ENCODE measurements at regions of chr10 and their contacts with region 1.

Region 1: GRCh38 chr10:6151087-6151977 is 51.4 kb upstream of the PFKFB3 start:
- DNase-seq: peak; percentile 88 to 95 (median 92)
- H3K4me3 ChIP-seq: peak overlapping the region in 6 of 7 experiments; percentile 19 to 76 (median 56)
- H3K27ac ChIP-seq: peak overlapping the region; percentile 33 to 67
- H3K4me1 ChIP-seq: peaks cover 14 to 73% (median 59%) of the 10 kb centered on the region in 4 experiments
- H3K27me3 ChIP-seq: no peaks in the 10 kb centered on the region

Region 2: DNA sequence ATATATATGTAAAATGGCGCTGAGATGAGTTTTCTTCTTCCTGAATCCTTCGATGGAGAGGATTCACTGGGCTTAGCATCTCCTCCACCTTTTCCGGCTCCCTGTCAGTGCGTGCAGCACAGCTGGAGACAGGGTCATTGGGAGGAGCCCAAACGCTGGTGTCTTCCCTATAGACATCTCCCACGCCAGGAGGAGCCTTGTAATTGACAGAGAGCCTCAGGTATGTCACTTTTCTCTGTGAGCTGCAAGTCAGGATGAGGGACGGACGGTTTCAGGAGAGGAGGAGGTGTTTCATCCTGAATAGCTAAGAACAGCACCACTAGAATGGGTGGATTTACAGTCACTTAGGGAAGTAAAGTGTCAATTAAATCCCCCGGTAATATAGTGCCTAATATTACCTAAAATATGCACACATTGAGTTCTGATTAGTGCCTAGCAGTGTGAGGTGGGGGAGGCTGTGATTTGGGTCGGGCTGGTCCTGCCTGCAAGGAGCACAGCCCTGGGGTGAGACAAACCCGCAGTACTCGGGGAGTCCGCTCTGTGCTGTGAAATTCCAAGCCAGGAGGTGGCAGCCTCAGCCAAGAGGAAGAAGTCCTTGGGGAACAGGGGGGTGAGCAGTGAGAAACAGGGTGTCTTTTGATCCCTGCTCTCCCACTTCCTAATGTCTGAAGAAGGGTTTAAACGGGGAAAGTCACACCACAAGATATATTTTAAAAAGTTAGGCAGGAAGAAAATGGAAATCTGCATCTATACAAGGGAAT is 202.2 kb before region 1 on chr10:
- CTCF ChIA-PET with region 1: no interaction called
- POLR2A ChIA-PET with region 1: no interaction called
- DNase-seq: peak; percentile 29 to 49 (median 39)
- H3K4me3 ChIP-seq: no peak overlapping the region
- H3K27ac ChIP-seq: no peak overlapping the region
- H3K4me1 ChIP-seq: peaks cover 0 to 26% (median 24%) of the 10 kb centered on the region in 4 experiments
- H3K27me3 ChIP-seq: no peaks in the 10 kb centered on the region

Region 3: GRCh38 chr10:6108603-6109443 is 42.5 kb before region 1 on chr10:
- CTCF ChIA-PET with region 1: interaction called, 30 read pairs
- POLR2A ChIA-PET with region 1: interaction called, 3 read pairs
- DNase-seq: peak; percentile 64 to 81 (median 78)
- H3K4me3 ChIP-seq: no peak overlapping the region
- H3K27ac ChIP-seq: peak overlapping the region in 1 of 2 experiments; percentile 6
- H3K4me1 ChIP-seq: peaks cover 0 to 9% (median 4%) of the 10 kb centered on the region in 4 experiments
- H3K27me3 ChIP-seq: no peaks in the 10 kb centered on the region

Region 4: GRCh38 chr10:6128591-6129251 is 22.6 kb before region 1 on chr10:
- CTCF ChIA-PET with region 1: interaction called, 20 read pairs
- POLR2A ChIA-PET with region 1: interaction called, 7 read pairs
- DNase-seq: peak; percentile 36 to 85 (median 82)
- H3K4me3 ChIP-seq: peak overlapping the region in 4 of 7 experiments; percentile 6 to 63 (median 30)
- H3K27ac ChIP-seq: no peak overlapping the region
- H3K4me1 ChIP-seq: peaks cover 7 to 41% (median 39%) of the 10 kb centered on the region in 4 experiments
- H3K27me3 ChIP-seq: no peaks in the 10 kb centered on the region

Region 5: DNA sequence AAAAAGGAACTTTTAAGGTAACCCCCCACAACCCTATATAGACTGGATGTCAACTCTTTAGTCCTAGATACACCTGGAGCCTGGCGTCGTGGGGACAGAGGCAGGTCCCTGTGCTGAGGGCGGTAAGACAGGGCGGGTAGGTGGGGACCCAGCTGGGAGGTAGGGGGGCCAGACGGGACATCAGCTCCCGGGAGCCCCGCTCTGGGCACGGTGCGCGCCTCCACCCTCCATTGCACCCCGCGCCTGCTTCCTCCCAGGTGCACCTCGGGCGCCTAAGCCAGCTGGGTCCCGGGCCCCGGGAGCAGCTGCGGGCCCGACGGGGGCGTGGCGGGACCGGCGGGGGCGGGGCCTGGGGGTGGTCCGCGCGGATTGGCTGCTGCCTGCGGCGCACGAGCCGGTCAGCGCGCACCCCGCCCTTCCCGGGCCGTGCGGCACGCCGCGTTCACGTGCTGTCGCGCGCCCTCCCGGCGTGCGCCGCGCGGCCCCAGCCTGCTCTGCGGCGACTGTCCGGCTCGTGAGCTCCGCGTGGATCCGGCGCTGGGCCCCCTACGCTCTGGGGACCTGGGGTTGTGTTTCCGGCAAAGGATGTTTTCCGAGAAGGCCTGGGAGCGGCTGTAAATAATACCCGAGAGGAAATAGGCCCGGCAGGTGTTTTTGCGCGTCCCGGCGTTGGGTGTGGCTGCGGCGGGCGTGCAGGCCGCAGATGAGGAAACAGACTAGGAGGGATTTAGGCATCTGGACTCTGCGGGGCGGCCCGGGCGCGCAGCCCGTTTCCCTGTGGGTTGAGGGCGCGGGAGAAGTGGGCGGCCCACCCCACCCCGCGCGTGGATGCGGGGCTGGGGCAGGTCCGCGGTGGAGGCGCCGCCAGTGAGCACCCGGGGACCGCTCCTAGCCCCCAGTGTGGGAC is 12.3 kb after region 1 on chr10:
- CTCF ChIA-PET with region 1: interaction called, 34 read pairs
- POLR2A ChIA-PET with region 1: interaction called, 10 read pairs
- DNase-seq: peak; percentile 93 to 98 (median 96)
- H3K4me3 ChIP-seq: peak overlapping the region in 6 of 7 experiments; percentile 29 to 81 (median 66)
- H3K27ac ChIP-seq: peak overlapping the region; percentile 50 to 91
- H3K4me1 ChIP-seq: peaks cover 5 to 46% (median 34%) of the 10 kb centered on the region in 4 experiments
- H3K27me3 ChIP-seq: no peaks in the 10 kb centered on the region

Region 6: GRCh38 chr10:6202684-6203330 is 51.5 kb after region 1 on chr10 and contains the start of gene PFKFB3:
- CTCF ChIA-PET with region 1: interaction called, 12 read pairs
- POLR2A ChIA-PET with region 1: interaction called, 7 read pairs
- DNase-seq: peak; percentile 87 to 93 (median 92)
- H3K4me3 ChIP-seq: peak within 1 kb of the TSS; percentile 65 to 83 (median 73)
- H3K27ac ChIP-seq: no peak within 1 kb of the TSS
- H3K4me1 ChIP-seq: peaks cover 0 to 43% (median 39%) of the 10 kb centered on the region in 4 experiments
- H3K27me3 ChIP-seq: peaks cover 0 to 5% (median 4%) of the 10 kb centered on the region in 5 experiments